ENCODE measurements at regions of chr5 and their contacts with region 1.

Region 1: DNA sequence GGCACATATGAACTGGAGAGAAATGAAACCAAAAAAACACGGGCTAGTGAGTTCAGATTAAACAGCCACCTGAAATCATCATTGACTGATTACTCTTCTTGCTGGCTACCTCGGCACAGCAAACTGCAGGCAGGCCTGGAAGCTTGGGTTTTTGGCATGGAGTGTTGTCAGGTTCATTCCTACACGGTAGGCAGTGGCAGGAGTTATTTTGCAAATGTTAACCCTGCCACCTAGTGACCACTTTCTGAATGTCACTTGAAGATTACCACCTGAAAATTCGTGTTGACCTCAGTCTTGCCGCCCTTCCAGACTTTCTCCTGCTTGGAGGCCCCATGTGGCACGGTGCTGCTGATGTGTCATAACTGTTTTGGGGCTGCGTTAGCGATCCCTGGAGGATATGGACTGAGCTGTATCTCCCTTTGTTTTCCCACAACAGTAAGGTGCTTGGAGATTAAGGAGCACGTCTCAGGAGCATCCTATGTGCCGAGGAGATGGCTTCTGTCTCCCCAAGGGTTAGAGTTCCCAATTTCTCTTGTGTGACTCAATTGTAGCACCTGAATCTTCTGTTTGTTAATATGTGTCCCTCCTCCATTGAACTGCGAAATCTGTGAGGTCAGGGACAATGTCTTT is 12.7 kb upstream of the CD180 start:
- DNase-seq: peak; percentile 71
- ATAC-seq: peak; percentile 39
- H3K4me3 Mint-ChIP-seq: no peak overlapping the region
- H3K27ac Mint-ChIP-seq: peak overlapping the region; percentile 76
- H3K4me1 Mint-ChIP-seq: peaks cover 56% of the 10 kb centered on the region
- H3K27me3 Mint-ChIP-seq: no peaks in the 10 kb centered on the region

Region 2: DNA sequence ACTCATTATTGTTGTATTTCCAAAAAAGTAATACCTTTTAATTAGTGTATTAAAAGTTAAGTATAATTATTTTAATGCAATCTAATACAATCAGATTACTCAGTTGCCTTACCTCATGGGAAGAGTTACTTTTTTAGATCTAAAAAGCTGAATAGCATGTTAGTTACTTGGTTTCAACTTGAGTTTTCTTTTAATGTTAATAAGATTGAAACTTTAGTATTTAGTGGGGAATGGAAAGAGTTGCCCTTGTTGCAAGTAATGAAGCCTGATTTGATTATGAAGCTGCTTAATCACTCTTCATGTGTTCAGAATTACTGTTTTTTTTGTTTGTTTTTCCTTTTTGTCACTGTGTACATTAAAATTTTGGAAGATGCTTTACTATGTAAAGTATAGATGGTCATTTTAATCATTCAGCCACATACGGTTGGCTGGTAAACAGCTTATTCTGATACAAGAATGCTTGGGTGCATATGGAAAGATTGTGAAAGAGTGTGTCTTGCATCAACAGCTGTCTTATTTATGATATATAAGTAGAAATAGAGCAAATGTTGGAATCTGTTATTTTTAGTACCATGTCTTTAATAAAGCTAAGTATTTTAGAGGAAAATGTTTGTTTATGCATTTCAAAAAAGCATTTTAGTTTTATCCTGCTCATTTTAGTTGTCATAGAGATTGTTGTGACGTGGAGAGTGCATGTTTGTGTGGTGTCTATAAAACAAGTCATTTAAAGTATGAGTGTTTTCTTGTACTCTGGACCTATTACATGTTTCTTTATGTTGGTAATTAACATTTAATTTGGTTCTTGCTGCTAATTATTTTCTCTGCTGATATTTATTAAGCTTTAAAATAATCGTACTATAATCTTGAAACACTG is 1028.7 kb before region 1 on chr5:
- CTCF ChIA-PET with region 1: no interaction called
- POLR2A ChIA-PET with region 1: no interaction called
- intact Hi-C with region 1: loop called in 1 of 2 experiments (anchors 5 kb)
- DNase-seq: no peak
- ATAC-seq: peak; percentile 61
- H3K4me3 Mint-ChIP-seq: no peak overlapping the region
- H3K27ac Mint-ChIP-seq: peak overlapping the region; percentile 33
- H3K4me1 Mint-ChIP-seq: peaks cover 17% of the 10 kb centered on the region
- H3K27me3 Mint-ChIP-seq: no peaks in the 10 kb centered on the region

Region 3: GRCh38 chr5:66814146-66814991 is 394.9 kb before region 1 on chr5:
- CTCF ChIA-PET with region 1: no interaction called
- POLR2A ChIA-PET with region 1: no interaction called
- intact Hi-C with region 1: loop called in 1 of 2 experiments (anchors 1 kb)
- DNase-seq: peak; percentile 70
- ATAC-seq: peak; percentile 83
- H3K4me3 Mint-ChIP-seq: no peak overlapping the region
- H3K27ac Mint-ChIP-seq: no peak overlapping the region
- H3K4me1 Mint-ChIP-seq: peaks cover 3% of the 10 kb centered on the region
- H3K27me3 Mint-ChIP-seq: peaks cover 3% of the 10 kb centered on the region

Region 4: DNA sequence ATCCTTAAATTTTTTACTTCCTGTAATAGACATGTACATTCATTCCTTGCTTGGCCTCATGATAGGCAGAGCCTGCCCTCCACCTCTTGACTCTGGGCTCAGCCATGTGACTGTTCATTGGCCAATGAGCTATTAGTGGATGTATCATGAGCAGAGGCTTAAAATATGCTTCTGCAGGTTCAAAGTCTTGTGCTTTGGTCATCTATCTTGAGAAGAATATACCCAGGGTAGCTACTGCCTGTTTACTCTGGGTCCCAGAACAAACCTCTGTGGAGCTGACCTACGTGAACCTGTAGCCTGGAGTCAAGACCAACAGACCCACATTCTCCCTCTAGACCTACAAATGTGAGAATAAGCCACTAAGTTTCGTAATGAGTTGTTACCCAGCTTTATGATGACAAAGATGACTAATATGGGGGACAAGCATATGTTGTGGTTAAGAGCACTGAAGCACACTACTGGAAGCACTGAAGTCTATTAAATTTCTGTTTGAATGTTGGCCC is 368.7 kb before region 1 on chr5:
- CTCF ChIA-PET with region 1: no interaction called
- POLR2A ChIA-PET with region 1: no interaction called
- intact Hi-C with region 1: loop called in 1 of 2 experiments (anchors 1 kb)
- DNase-seq: peak; percentile 68
- ATAC-seq: peak; percentile 86
- H3K4me3 Mint-ChIP-seq: no peak overlapping the region
- H3K27ac Mint-ChIP-seq: peak overlapping the region; percentile 67
- H3K4me1 Mint-ChIP-seq: peaks cover 47% of the 10 kb centered on the region
- H3K27me3 Mint-ChIP-seq: peaks cover 20% of the 10 kb centered on the region

Region 5: DNA sequence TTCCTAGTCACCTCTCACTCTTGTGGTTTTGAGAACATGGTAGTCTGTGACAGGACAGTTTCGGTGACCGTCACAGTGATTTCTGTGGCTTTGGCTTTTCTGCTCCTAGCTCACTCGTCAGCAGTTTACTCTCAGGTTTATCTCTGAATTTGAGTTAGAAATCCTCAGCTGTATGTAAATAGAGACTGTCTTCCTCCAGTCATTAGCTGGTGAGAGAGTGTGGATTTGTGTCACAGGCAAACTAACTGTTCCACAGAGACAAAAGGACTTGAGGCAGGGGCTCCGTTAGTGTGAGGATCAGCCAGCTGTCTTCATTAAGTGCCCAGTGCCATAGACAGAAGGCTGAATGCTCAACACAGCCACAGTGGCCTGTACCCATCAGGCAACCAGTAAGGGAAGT is 144.0 kb before region 1 on chr5:
- CTCF ChIA-PET with region 1: no interaction called
- POLR2A ChIA-PET with region 1: no interaction called
- intact Hi-C with region 1: loop called in 1 of 2 experiments (anchors 1 kb)
- DNase-seq: peak; percentile 64
- ATAC-seq: peak; percentile 73
- H3K4me3 Mint-ChIP-seq: no peak overlapping the region
- H3K27ac Mint-ChIP-seq: peak overlapping the region; percentile 59
- H3K4me1 Mint-ChIP-seq: peaks cover 26% of the 10 kb centered on the region
- H3K27me3 Mint-ChIP-seq: no peaks in the 10 kb centered on the region

Region 6: DNA sequence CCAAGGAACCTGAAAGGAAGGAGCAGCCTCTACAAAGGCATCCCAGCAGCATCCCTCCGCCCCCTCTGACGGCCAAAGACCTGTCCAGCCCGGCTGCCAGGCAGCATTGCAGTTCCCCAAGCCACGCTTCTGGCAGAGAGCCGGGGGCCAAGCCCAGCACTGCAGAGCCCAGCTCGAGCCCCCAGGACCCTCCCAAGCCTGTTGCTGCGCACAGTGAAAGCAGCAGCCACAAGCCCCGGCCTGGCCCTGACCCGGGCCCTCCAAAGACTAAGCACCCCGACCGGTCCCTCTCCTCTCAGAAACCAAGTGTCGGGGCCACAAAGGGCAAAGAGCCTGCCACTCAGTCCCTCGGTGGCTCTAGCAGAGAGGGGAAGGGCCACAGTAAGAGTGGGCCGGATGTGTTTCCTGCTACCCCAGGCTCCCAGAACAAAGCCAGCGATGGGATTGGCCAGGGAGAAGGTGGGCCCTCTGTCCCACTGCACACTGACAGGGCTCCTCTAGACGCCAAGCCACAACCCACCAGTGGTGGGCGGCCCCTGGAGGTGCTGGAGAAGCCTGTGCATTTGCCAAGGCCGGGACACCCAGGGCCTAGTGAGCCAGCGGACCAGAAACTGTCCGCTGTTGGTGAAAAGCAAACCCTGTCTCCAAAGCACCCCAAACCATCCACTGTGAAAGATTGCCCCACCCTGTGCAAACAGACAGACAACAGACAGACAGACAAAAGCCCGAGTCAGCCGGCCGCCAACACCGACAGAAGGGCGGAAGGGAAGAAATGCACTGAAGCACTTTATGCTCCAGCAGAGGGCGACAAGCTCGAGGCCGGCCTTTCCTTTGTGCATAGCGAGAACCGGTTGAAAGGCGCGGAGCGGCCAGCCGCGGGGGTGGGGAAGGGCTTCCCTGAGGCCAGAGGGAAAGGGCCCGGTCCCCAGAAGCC is 43.5 kb before region 1 on chr5:
- CTCF ChIA-PET with region 1: interaction called, 276 read pairs
- POLR2A ChIA-PET with region 1: interaction called, 6 read pairs
- intact Hi-C with region 1: loop called (anchors 1 kb)
- DNase-seq: peak; percentile 89
- ATAC-seq: peak; percentile 76
- H3K4me3 Mint-ChIP-seq: peak overlapping the region; percentile 74
- H3K27ac Mint-ChIP-seq: peak overlapping the region; percentile 97
- H3K4me1 Mint-ChIP-seq: peaks cover 57% of the 10 kb centered on the region
- H3K27me3 Mint-ChIP-seq: no peaks in the 10 kb centered on the region

Measured in activated CD4-positive, alpha-beta T cell treated with anti-CD3 and anti-CD28 coated beads for 36 hours (primary cell).